ENCODE measurements at regions of chr10 and their contacts with region 1.

Region 1: GRCh38 chr10:93790439-93790838 is 32.7 kb downstream of the LGI1 start:
- DNase-seq: no peak
- H3K4me3 ChIP-seq: no peak overlapping the region
- H3K27me3 ChIP-seq: no peaks in the 10 kb centered on the region
- CTCF ChIP-seq: no peak

Region 2: GRCh38 chr10:93752761-93753160 is 37.7 kb before region 1 on chr10:
- CTCF ChIA-PET with region 1: interaction called, 3 read pairs
- POLR2A ChIA-PET with region 1: interaction called, 10 read pairs
- DNase-seq: peak; percentile 29
- H3K4me3 ChIP-seq: no peak overlapping the region
- H3K27me3 ChIP-seq: peaks cover 3% of the 10 kb centered on the region
- CTCF ChIP-seq: no peak

Measured in BJ (cell line).